Activated CD4-positive, alpha-beta T cell treated with anti-CD3 and anti-CD28 coated beads, Interleukin-2, amount 10 ng/mL, durations not matched to agents 24 days and 14 days (primary cell): ENCODE measurements at regions of chr4 and their contacts with region 1.

Region 1: DNA sequence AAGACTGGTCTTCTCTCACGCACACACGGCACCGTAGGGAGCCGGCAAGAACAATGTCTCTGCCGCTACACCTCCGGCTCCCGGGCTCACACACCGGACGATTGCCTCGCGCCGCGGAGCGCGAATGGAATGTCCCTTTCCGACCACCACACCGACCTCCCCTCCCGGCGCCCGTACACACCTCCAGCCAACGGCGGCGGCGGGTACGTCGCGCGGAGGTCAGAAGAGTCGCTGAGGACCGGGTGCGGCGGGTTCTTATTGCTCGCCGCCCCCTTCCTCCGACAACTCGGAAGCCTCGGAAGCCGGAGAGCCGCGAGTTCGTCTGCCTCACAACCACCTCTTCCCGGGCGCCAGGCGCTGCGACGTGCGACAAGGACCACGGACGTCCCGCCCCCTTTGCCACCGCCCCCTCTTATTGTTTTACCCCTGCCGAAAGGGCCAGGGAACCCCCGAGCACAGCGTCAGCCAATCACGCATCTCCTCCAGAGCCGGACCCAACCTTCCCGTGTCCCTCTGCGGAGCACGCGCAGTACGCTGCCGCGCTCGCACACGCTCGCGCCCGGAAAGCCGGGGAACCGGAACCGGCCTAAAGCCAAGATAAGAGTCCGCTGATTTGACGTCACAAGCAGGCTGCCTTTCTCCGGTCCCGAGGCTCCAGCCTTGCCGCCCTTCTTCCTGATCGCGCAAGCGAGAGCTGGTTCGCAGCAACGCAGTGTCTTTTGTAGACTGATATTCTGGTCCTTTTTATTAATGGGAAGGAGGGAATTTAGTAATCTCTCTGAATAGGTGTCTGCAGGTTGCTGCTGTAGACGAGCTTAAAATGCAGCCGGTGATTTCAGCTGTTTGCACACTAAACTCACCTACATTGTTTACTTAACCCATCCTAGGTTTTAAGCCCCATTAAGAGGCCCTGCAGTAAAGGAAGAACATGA is at the start of gene G3BP2:
- DNase-seq: peak; percentile 99
- H3K4me3 Mint-ChIP-seq: peak within 1 kb of the TSS; percentile 98
- H3K27ac Mint-ChIP-seq: peak within 1 kb of the TSS; percentile 100
- H3K4me1 Mint-ChIP-seq: peaks cover 44% of the 10 kb centered on the region
- H3K27me3 Mint-ChIP-seq: no peaks in the 10 kb centered on the region
- total RNA-seq, gene G3BP2: 135 and 146 TPM in 2 replicates

Region 2: DNA sequence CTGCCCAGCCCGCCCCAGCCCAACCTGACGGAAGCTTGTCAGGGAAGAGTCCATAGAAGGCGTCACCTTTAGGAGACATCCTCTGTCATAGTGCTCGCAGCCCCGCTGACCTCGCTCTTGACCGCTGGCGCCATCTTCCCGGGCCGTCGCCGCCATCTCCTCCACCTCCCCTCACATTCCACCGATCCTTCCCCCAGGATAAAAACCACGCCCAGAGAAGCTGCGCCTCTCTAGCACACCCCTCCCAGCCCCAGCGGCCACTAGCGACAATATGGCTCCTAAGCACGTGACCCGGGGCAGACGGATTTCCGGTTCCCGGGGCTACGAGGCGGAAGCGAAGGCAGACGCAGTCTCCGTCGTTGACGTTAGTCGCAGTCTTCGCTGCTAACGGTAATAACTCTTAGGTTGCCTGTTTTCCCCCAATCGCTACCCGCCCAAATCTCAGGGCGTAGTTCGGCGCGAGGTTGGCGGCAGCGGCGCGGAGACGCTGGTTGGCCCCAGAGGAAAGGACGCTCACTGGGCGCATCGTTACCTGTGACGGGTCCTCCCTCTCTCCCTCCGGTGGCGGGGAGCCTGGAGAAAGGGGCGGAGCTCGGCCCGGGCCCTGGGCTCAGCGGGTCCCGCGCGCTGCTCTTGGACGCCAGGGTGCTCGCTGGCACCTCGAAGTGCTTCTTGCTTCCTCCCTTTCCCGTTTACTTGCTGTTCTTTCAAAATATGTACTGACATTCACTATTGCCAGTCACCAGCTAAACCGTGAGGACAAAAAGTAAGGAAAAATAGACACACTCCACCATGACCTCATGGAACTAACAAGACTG is 159.0 kb before region 1 on chr4 and contains the starts of genes RCHY1 and THAP6:
- intact Hi-C with region 1: loop called (anchors 1 kb)
- DNase-seq: peak; percentile 98
- H3K4me3 Mint-ChIP-seq: no peak within 1 kb of the TSS
- H3K27ac Mint-ChIP-seq: peak within 1 kb of the TSS; percentile 99
- H3K4me1 Mint-ChIP-seq: peaks cover 29% of the 10 kb centered on the region
- H3K27me3 Mint-ChIP-seq: no peaks in the 10 kb centered on the region
- total RNA-seq, gene RCHY1: 22.4 and 29.4 TPM in 2 replicates
- total RNA-seq, gene THAP6: 16.3 and 22.7 TPM in 2 replicates

Region 3: GRCh38 chr4:75630174-75630936 is 42.9 kb before region 1 on chr4 and contains the start of gene CDKL2:
- intact Hi-C with region 1: loop called (anchors 1 kb)
- DNase-seq: peak; percentile 97
- H3K4me3 Mint-ChIP-seq: peak within 1 kb of the TSS; percentile 84
- H3K27ac Mint-ChIP-seq: peak within 1 kb of the TSS; percentile 43
- H3K4me1 Mint-ChIP-seq: peaks cover 16% of the 10 kb centered on the region
- H3K27me3 Mint-ChIP-seq: peaks cover 4% of the 10 kb centered on the region
- total RNA-seq, gene CDKL2: 0.36 TPM in 1 of 2 replicates, not detected in the other

Region 4: GRCh38 chr4:75653845-75654503 is 19.3 kb before region 1 on chr4:
- intact Hi-C with region 1: loop called (anchors 1 kb)
- DNase-seq: no peak
- H3K4me3 Mint-ChIP-seq: peak overlapping the region; percentile 76
- H3K27ac Mint-ChIP-seq: peak overlapping the region; percentile 81
- H3K4me1 Mint-ChIP-seq: peaks cover 42% of the 10 kb centered on the region
- H3K27me3 Mint-ChIP-seq: no peaks in the 10 kb centered on the region

Region 5: GRCh38 chr4:75683482-75684155 is 10.3 kb after region 1 on chr4:
- intact Hi-C with region 1: loop called (anchors 1 kb)
- DNase-seq: no peak
- H3K4me3 Mint-ChIP-seq: no peak overlapping the region
- H3K27ac Mint-ChIP-seq: peak overlapping the region; percentile 17
- H3K4me1 Mint-ChIP-seq: peaks cover 26% of the 10 kb centered on the region
- H3K27me3 Mint-ChIP-seq: no peaks in the 10 kb centered on the region

Region 6: DNA sequence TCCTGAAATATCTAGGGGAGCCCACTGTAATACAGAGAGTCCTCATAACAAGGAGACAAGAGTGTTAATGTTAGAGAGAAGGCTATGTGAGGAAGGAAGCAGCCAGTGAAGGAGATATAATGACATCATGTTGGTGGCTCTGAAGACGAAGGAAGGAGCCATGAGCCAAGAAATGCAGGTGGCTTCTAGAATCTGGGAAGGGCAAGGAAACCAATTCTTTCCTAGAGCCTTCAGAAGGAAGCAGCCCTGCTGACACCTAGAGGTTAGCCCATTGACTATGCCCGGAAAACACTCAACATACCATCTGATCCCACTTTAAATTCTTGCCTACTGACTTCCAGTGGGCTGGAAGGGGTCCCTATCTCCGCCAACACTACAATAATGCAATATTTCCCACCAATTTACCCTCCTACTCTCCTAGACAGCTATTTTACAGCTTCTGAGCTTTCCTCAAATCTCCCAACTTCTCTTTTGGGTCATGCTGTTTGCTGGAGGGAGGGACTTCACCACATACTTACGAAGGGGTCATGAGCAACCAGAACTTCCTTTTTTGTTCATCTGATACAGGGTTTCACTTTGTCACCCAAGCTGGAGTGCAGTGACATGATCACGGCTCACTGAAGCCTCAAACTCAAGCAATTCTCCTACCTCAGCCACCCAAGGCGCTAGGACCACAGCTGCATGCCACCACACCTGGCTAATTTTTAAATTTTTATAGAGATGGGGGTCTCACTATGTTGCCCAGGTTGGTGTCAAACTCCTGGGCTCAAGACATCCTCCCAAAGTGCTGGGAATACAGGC is 25.1 kb after region 1 on chr4:
- intact Hi-C with region 1: loop called (anchors 1 kb)
- DNase-seq: peak; percentile 71
- H3K4me3 Mint-ChIP-seq: peak overlapping the region; percentile 27
- H3K27ac Mint-ChIP-seq: peak overlapping the region; percentile 80
- H3K4me1 Mint-ChIP-seq: peaks cover 27% of the 10 kb centered on the region
- H3K27me3 Mint-ChIP-seq: no peaks in the 10 kb centered on the region

Region 7: GRCh38 chr4:75817901-75818300 is 144.6 kb after region 1 on chr4:
- intact Hi-C with region 1: no loop called
- DNase-seq: peak; percentile 50
- H3K4me3 Mint-ChIP-seq: no peak overlapping the region
- H3K27ac Mint-ChIP-seq: no peak overlapping the region
- H3K4me1 Mint-ChIP-seq: no peaks in the 10 kb centered on the region
- H3K27me3 Mint-ChIP-seq: no peaks in the 10 kb centered on the region

Region 8: DNA sequence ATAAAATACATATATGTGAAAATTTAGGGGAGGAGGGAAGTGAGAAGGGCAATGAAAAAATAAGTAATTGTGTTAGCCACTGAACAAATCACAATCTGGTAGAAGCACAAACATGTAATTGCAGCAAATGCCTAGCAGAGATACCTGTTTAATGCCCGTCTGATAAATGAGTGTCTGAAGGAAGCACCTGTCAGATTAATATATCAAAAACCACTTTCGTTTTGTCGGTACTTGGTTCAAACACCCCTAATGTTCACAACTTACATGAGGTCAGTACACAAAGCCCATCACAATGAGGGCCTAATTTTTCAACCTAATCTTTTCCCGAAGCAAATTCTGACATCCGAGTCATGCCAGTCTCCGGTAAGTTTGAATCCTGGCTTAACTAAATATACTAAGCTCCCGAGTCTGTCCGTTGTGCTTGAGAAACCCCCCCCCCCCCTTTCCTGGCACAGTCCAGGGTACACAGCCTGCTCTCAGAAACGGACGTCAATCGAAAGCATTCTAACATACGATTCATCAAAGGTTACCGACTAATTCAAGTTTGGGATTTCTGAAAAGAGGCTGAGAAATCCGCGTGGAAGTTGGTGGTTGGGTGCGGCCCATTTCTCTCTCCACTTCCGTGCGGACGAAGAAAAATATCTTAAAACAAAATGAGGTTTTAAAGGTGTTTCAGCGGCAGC is 316.7 kb after region 1 on chr4:
- intact Hi-C with region 1: loop called (anchors 5 kb)
- DNase-seq: no peak
- H3K4me3 Mint-ChIP-seq: peak overlapping the region; percentile 89
- H3K27ac Mint-ChIP-seq: peak overlapping the region; percentile 81
- H3K4me1 Mint-ChIP-seq: peaks cover 31% of the 10 kb centered on the region
- H3K27me3 Mint-ChIP-seq: peaks cover 9% of the 10 kb centered on the region